ENCODE measurements at regions of chr11 and their contacts with region 1.

Region 1: GRCh38 chr11:121591405-121592033 is 138.8 kb upstream of the SORL1-AS1 start:
- DNase-seq: peak; percentile 89
- H3K4me3 ChIP-seq: no peak overlapping the region
- H3K27ac ChIP-seq: no peak overlapping the region
- H3K4me1 ChIP-seq: peaks cover 11% of the 10 kb centered on the region
- H3K27me3 ChIP-seq: no peaks in the 10 kb centered on the region
- CTCF ChIP-seq: peak; percentile 93

Region 2: DNA sequence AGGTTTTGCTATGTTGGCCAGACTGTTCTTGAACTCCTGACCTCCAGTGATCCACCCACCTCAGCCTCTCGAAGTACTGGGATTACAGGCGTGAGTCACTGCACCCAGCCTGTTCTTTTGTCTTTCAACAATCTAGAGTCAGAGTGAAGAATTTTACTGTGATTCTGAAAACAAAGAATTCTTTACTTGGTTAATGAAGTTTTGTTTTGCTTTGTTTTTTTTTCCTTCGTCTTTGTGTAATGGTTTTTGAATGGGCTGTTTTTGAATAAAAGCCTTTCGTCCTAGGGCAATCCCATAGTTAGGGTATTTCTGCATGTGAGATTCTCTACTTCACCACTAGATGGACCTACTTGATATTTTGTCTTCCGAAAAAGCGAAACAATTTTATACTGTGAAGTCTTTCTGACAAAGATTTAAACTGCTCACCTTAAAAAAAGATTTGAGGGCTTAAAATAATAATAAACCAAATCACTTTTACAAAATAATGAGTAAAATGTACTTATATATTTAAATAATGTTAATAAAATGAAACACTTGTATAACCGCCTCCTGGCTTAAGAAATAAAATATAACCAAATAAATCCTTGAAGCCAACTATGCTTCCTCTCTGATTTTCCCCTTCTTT is 342.4 kb before region 1 on chr11:
- CTCF ChIA-PET with region 1: interaction called, 4 read pairs
- POLR2A ChIA-PET with region 1: no interaction called
- intact Hi-C with region 1: loop called (anchors 2 kb)
- DNase-seq: peak; percentile 62
- H3K4me3 ChIP-seq: no peak overlapping the region
- H3K27ac ChIP-seq: no peak overlapping the region
- H3K4me1 ChIP-seq: no peaks in the 10 kb centered on the region
- H3K27me3 ChIP-seq: no peaks in the 10 kb centered on the region
- CTCF ChIP-seq: peak; percentile 82

Region 3: DNA sequence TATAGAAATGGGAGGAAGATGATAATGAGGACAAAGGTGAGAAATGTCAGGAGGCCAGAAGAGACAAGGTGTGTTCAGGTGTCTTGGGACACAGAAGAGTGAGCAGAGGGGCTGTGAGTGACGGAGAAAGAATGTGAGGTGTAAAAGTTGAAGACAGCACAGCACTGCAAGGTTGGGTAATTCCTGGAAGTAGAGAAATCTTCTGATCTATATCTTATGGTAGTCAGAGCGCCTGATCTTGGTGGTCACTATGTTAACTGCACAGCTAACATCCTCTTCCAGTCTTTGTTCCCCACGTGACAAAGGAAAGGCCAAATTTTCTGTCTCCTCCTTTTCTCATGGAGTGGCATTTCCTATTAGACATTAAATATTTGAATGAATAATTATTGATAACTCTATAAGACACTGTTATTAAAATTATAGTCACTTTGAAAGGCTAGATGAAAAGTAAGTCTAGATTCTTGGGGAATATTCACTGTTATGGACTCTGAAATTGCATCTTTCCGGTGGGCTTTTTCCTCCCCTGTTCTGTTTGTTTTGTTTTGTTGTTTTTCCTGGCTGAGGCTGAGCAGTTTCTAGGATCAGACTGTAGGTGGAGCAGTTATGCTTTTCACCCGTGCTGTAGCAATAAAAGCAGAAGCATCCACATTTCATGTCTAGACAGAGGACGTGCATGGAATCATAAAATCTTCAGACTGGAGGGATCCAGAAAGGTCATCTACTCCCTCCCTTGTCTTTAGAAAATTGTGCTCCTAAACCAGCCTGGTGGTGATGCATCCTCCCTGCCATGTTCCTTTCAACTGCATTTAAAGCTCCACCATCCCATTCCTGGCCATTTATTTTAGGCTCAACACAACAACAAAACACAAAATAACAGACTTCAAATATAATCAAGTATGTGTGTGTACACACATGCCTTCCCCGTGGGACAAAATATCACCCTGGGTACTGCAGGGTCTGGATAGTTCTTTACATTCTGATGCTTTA is 272.4 kb before region 1 on chr11:
- CTCF ChIA-PET with region 1: interaction called, 9 read pairs
- POLR2A ChIA-PET with region 1: no interaction called
- intact Hi-C with region 1: loop called (anchors 1 kb)
- DNase-seq: peak; percentile 71
- H3K4me3 ChIP-seq: no peak overlapping the region
- H3K27ac ChIP-seq: no peak overlapping the region
- H3K4me1 ChIP-seq: no peaks in the 10 kb centered on the region
- H3K27me3 ChIP-seq: no peaks in the 10 kb centered on the region
- CTCF ChIP-seq: peak; percentile 86

Region 4: DNA sequence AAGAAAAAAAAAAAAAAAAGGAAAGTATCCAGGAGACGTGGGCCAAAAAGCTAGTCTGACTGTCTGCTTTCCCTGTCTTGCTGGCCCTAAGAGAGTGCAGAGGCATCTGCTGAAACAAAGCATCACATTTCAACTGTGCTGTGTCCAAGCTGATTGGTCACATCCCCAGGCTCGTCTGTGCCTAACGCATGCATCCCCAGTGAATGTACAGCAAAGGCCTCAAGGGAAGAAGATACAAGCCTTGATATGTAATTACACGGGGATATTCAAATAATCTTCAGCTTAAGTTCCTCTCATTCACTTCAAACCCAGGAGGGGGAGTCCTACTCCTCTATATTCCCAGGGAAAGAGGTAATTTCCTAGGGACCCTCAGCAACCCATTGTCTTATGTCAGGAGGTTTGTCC is 144.8 kb before region 1 on chr11:
- CTCF ChIA-PET with region 1: interaction called, 16 read pairs
- POLR2A ChIA-PET with region 1: no interaction called
- intact Hi-C with region 1: loop called (anchors 5 kb)
- DNase-seq: peak; percentile 65
- H3K4me3 ChIP-seq: no peak overlapping the region
- H3K27ac ChIP-seq: no peak overlapping the region
- H3K4me1 ChIP-seq: no peaks in the 10 kb centered on the region
- H3K27me3 ChIP-seq: peaks cover 14% of the 10 kb centered on the region
- CTCF ChIP-seq: peak; percentile 49

Region 5: GRCh38 chr11:121451986-121452608 is 139.4 kb before region 1 on chr11 and contains the start of gene SORL1:
- CTCF ChIA-PET with region 1: no interaction called
- POLR2A ChIA-PET with region 1: no interaction called
- intact Hi-C with region 1: loop called (anchors 5 kb)
- DNase-seq: peak; percentile 76
- H3K4me3 ChIP-seq: peak within 1 kb of the TSS; percentile 62
- H3K27ac ChIP-seq: no peak within 1 kb of the TSS
- H3K4me1 ChIP-seq: no peaks in the 10 kb centered on the region
- H3K27me3 ChIP-seq: peaks cover 42% of the 10 kb centered on the region
- CTCF ChIP-seq: peak; percentile 59
- total RNA-seq, gene SORL1: 0.95 and 1.2 TPM in 2 replicates